Panc1 (cell line): ENCODE measurements at regions of chr15 and their contacts with region 1.

Region 1: GRCh38 chr15:44137750-44138149 is 57.3 kb downstream of the FRMD5 start:
- DNase-seq: no peak
- ATAC-seq: no peak; the same call in 1 of the 2 replicates
- H3K4me3 ChIP-seq: no peak overlapping the region
- H3K27ac ChIP-seq: 0 out of 2 replicates have a peak overlapping the region, but pooled peaks have one; percentile 32
- H3K4me1 ChIP-seq: peaks cover 9% of the 10 kb centered on the region; the same call in 1 of the 2 replicates
- H3K27me3 ChIP-seq: no peaks in the 10 kb centered on the region
- CTCF ChIP-seq: no peak

Region 2: DNA sequence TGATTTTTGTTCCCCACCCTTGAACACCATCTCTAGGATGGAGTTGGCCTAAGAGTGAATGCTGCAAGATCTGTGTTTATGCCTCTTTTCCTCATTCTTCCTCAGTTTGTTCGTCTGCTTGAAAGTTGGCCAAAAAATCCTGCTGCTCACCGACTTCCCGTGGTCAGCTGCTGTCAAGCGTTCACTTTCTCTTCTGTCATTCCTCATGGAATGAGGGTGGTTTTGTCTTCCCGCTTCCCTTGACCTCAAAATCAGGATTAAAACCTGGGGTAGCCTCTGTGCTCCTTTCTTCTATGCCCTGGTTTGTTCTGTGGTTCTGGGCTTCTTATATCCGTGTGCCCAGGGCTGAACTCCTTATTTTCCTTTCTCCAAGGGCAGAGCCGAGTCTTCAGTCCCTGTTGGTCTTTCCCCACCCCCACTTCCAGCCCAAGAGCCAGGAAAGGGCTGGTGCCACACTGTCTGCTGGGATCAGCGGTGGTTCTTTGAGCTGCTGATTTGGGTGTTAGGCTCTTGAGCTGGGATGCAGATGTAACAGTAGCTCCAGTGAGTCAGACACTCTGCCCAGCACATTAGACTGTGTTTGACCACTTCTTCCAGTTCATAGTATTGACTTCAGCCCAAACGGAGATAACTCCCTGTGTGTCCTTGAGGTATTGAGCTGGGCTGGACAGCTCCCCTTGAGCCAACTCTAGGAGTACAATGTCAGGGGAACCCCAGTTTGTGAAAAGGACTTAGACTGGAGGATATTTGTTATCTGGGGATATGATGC is 343.3 kb before region 1 on chr15:
- CTCF ChIA-PET with region 1: no interaction called
- POLR2A ChIA-PET with region 1: interaction called, 17 read pairs
- in situ Hi-C with region 1: no loop called
- intact Hi-C with region 1: no loop called
- DNase-seq: no peak
- ATAC-seq: no peak
- H3K4me3 ChIP-seq: 0 out of 4 replicates have a peak overlapping the region, but pooled peaks of 1 of the 2 experiments have one; percentile 0
- H3K27ac ChIP-seq: peak overlapping the region; percentile 98
- H3K4me1 ChIP-seq: peaks cover 44% of the 10 kb centered on the region
- H3K27me3 ChIP-seq: no peaks in the 10 kb centered on the region
- CTCF ChIP-seq: no peak

Region 3: GRCh38 chr15:44081026-44082013 is 56.4 kb before region 1 on chr15:
- CTCF ChIA-PET with region 1: interaction called, 14 read pairs
- POLR2A ChIA-PET with region 1: interaction called, 13 read pairs
- in situ Hi-C with region 1: no loop called
- intact Hi-C with region 1: no loop called
- DNase-seq: no peak
- ATAC-seq: no peak
- H3K4me3 ChIP-seq: no peak overlapping the region
- H3K27ac ChIP-seq: no peak overlapping the region
- H3K4me1 ChIP-seq: peaks cover 10% of the 10 kb centered on the region
- H3K27me3 ChIP-seq: no peaks in the 10 kb centered on the region
- CTCF ChIP-seq: no peak

Region 4: GRCh38 chr15:44157685-44158099 is 19.9 kb after region 1 on chr15:
- CTCF ChIA-PET with region 1: no interaction called
- POLR2A ChIA-PET with region 1: no interaction called
- in situ Hi-C with region 1: no loop called
- intact Hi-C with region 1: no loop called
- DNase-seq: peak; percentile 92
- ATAC-seq: peak; percentile 91
- H3K4me3 ChIP-seq: no peak overlapping the region
- H3K27ac ChIP-seq: peak overlapping the region; percentile 77
- H3K4me1 ChIP-seq: peaks cover 30% of the 10 kb centered on the region
- H3K27me3 ChIP-seq: no peaks in the 10 kb centered on the region
- CTCF ChIP-seq: no peak

Region 5: GRCh38 chr15:44243829-44244228 is 106.1 kb after region 1 on chr15:
- CTCF ChIA-PET with region 1: no interaction called
- POLR2A ChIA-PET with region 1: no interaction called
- in situ Hi-C with region 1: no loop called
- intact Hi-C with region 1: no loop called
- DNase-seq: no peak
- ATAC-seq: peak; percentile 77
- H3K4me3 ChIP-seq: no peak overlapping the region
- H3K27ac ChIP-seq: no peak overlapping the region
- H3K4me1 ChIP-seq: peaks cover 4% of the 10 kb centered on the region; the same call in 1 of the 2 replicates
- H3K27me3 ChIP-seq: no peaks in the 10 kb centered on the region
- CTCF ChIP-seq: peak; percentile 77